WTC11 (cell line): ENCODE measurements at regions of chr9 and their contacts with region 1.

Region 1: DNA sequence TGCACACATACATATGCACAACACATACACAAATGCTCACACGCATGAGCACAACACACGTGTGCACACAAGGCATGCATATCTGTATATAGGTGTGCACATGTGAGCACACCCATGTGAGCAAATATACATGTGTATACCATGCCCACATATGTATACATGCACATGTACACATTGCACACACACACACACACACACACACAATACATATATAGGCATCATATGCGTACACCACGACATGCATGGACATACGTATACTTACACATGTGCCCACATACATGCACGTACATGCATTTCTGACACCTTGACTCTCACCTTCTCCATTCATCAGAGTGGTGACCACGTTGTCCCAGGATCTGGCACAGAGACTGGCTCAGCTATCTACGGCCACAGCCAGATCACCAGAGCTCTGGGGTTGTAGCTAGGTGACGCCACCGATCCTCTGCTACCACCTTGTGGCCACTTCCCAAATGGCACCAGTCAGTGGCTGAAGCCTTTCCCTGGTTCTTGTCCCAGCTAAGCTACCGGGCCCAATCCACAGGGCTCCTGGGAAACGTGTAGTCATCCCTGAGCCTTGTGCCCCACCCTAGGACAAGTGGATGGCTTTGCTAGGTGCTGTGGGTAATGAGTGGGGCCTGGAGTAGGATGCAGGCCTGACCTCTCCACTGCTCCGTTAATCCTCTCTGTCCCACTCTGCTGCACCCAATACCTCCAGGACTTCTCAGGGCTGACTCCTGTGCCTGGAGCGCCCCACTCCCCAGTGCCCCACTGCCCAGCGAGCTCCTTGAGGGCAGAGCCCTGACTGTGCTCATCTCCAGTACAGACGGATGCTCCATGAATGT is 194.4 kb downstream of the RGS3 start:
- DNase-seq: peak; percentile 92
- ATAC-seq: peak; percentile 94
- H3K4me3 Mint-ChIP-seq: no peak overlapping the region
- H3K27ac Mint-ChIP-seq: no peak overlapping the region
- H3K4me1 Mint-ChIP-seq: peaks cover 12% of the 10 kb centered on the region
- H3K27me3 Mint-ChIP-seq: peaks cover 13% of the 10 kb centered on the region
- CTCF ChIP-seq: peak; percentile 83

Region 2: DNA sequence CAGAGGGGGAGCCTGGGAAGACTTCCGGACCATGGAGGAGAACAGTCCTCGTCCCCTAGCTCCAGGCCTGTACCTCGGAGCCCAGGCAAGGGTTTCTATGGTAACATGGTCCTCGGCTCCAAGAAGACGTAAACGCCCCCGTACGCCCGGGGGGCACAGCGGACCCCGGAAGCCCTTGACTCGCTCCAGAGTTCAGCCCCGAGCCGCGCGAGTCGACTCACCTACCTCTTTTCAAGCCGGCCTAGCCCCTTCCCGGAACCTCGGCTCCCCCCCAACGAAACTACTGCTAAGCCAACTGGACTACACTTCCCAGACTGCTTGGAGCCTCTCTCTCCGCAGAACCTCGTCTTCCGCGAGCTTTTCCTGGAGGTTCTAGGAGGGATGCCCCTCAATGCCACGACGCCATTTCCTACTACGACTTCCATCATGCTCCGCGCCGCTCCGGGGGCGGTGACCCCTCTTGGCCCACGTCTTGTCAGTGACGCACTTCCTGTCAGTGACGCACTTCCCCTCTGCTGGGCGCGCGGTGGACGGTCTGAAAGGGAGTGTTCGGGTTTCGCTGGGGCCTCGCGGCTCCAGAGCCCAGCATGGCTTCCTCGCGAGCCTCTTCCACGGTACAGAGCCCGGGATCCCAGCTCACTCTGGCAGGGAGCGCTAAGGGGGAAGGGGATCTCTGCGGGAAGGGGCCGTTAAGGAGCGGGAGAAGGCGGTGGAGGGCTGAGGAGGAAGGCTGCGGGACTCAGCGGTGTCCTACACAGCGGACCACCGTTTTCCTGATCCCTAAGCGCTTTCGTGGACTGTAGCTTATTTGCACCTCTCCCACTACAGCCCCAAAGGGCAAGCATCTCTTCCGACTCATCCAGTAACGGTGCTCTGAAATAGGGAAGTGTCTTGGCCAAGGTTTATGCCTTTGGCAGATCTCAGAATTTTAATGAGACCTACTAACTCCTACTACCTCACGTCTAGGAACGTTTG is 382.5 kb before region 1 on chr9 and contains the starts of genes CDC26 and PRPF4:
- CTCF ChIA-PET with region 1: interaction called, 38 read pairs
- POLR2A ChIA-PET with region 1: interaction called, 4 read pairs
- DNase-seq: peak; percentile 97
- ATAC-seq: peak; percentile 95
- H3K4me3 Mint-ChIP-seq: no peak within 1 kb of the TSS
- H3K27ac Mint-ChIP-seq: no peak within 1 kb of the TSS
- H3K4me1 Mint-ChIP-seq: peaks cover 7% of the 10 kb centered on the region
- H3K27me3 Mint-ChIP-seq: no peaks in the 10 kb centered on the region
- CTCF ChIP-seq: no peak
- total RNA-seq, gene CDC26: 36.9 to 39.8 TPM (median 37.0 TPM) in 3 replicates
- total RNA-seq, gene PRPF4: 29.0 to 32.4 TPM (median 30.4 TPM) in 3 replicates

Region 3: GRCh38 chr9:113446323-113446740 is 211.6 kb before region 1 on chr9:
- CTCF ChIA-PET with region 1: interaction called, 94 read pairs
- POLR2A ChIA-PET with region 1: no interaction called
- DNase-seq: no peak
- ATAC-seq: peak; percentile 48
- H3K4me3 Mint-ChIP-seq: no peak overlapping the region
- H3K27ac Mint-ChIP-seq: 0 out of 2 replicates have a peak overlapping the region, but pooled peaks have one; percentile 87
- H3K4me1 Mint-ChIP-seq: peaks cover 8% of the 10 kb centered on the region; the same call in 1 of the 2 replicates
- H3K27me3 Mint-ChIP-seq: no peaks in the 10 kb centered on the region
- CTCF ChIP-seq: 0 out of 2 replicates have a peak, but pooled peaks have one; percentile 33

Region 4: DNA sequence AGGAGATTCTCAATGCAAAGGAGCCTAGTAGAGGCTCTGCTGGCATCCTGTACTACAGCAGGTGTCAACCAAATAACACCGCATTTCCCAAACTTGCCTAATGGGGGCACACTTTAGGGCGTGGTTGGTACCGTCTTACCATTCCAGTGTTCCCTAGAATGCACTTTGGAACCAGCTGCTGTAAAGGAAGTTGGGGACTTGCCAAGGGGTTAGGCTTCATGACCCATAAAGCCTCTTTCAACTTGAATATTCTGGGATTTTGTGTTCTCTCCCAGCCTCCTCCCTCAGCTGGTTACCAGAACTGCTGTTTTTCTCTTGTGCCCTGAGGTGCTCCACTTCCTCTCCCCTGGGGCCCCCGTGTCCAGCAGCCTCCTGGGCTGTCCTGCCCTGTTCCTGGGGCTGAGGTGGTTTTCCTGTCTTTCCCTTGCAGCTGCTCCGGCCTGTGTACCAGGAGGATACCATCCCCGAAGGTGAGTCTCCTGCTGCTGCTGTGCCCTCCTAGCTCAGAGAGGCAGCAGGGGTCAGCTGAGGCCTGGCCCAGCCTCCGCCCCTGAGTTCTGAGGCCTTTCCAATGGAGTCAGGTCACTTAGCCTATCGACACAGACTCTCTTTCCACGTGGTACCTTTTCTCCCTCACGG is 149.7 kb before region 1 on chr9:
- CTCF ChIA-PET with region 1: interaction called, 13 read pairs
- POLR2A ChIA-PET with region 1: no interaction called
- DNase-seq: peak; percentile 70
- ATAC-seq: peak; percentile 68
- H3K4me3 Mint-ChIP-seq: no peak overlapping the region
- H3K27ac Mint-ChIP-seq: no peak overlapping the region
- H3K4me1 Mint-ChIP-seq: peaks cover 19% of the 10 kb centered on the region
- H3K27me3 Mint-ChIP-seq: no peaks in the 10 kb centered on the region
- CTCF ChIP-seq: peak; percentile 23; the same call in 1 of the 2 replicates

Region 5: DNA sequence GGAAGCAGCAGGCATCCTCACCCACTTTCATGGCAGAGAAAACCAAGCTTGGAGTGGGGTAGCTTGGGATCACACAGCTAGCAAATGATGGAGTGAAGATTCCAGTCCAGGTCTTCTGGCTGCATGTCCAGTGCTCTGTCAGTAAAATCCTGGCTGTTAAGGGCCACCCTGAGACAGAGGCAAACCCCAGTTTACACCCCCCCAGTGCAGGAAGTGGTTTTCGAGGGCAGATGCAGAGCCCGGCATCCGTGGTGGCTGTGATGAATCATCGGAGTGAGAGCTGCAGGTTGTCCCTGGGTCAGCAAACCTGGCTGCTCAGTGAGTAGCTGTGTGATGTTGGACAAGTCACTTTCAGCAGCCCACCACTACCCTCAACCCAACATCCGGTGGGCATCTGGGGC is 79.0 kb before region 1 on chr9:
- CTCF ChIA-PET with region 1: interaction called, 17 read pairs
- POLR2A ChIA-PET with region 1: no interaction called
- DNase-seq: no peak
- ATAC-seq: no peak
- H3K4me3 Mint-ChIP-seq: no peak overlapping the region
- H3K27ac Mint-ChIP-seq: no peak overlapping the region
- H3K4me1 Mint-ChIP-seq: peaks cover 24% of the 10 kb centered on the region
- H3K27me3 Mint-ChIP-seq: no peaks in the 10 kb centered on the region
- CTCF ChIP-seq: no peak

Region 6: GRCh38 chr9:113614843-113615648 is 42.9 kb before region 1 on chr9:
- CTCF ChIA-PET with region 1: interaction called, 17 read pairs
- POLR2A ChIA-PET with region 1: no interaction called
- DNase-seq: no peak
- ATAC-seq: no peak
- H3K4me3 Mint-ChIP-seq: no peak overlapping the region
- H3K27ac Mint-ChIP-seq: no peak overlapping the region
- H3K4me1 Mint-ChIP-seq: peaks cover 22% of the 10 kb centered on the region
- H3K27me3 Mint-ChIP-seq: no peaks in the 10 kb centered on the region
- CTCF ChIP-seq: no peak

Region 7: GRCh38 chr9:113682297-113682771 is 24.4 kb after region 1 on chr9:
- CTCF ChIA-PET with region 1: interaction called, 11 read pairs
- POLR2A ChIA-PET with region 1: no interaction called
- DNase-seq: peak; percentile 87
- ATAC-seq: peak; percentile 59
- H3K4me3 Mint-ChIP-seq: no peak overlapping the region
- H3K27ac Mint-ChIP-seq: no peak overlapping the region; the same call in 1 of the 2 replicates
- H3K4me1 Mint-ChIP-seq: peaks cover 7% of the 10 kb centered on the region
- H3K27me3 Mint-ChIP-seq: peaks cover 38% of the 10 kb centered on the region
- CTCF ChIP-seq: peak; percentile 87